ENCODE measurements at regions of chr3 and their contacts with region 1.

Region 1: DNA sequence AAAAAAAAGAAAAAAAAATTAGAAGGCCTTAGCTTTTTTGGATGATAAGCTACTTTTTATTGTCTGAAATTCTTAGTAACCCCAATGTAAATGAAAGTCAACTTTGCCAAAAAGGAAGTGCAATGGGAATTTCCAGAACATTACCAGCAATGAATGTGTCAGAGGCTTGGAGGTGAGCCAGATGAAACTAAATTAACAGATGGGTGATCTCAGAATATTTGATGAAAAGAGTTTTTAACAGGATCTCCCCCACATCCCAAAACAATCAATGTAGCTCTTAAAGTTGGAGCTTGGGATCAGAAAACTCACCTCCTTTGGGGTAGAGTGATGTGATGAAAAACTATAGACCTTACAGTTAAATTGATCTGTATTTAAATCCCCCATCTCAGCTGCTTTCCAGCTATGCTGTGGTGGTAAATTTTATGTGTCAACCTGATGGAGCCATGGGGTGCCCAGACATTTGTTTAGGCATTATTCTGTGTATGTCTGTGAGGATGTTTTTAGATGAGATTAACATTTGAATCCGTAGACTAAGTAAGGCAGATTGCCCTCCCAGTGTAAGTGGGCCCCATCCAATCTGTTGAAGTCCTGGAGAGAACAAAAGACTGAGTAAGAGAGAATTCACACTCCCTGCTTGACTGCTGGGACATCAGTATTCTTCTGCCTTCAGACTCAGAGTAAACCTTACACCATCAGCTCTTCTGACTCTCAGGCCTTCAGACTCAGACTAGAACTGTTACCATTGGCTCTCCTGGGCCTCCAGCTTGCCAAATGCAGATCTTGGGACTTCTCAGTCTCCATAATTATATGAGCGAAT is 84.3 kb upstream of the TNFSF10 start:
- DNase-seq: peak; percentile 54
- H3K27ac ChIP-seq: peak overlapping the region; percentile 77
- CTCF ChIP-seq: no peak

Region 2: GRCh38 chr3:172595641-172596393 is 11.7 kb before region 1 on chr3:
- CTCF ChIA-PET with region 1: interaction called, 11 read pairs
- POLR2A ChIA-PET with region 1: no interaction called
- DNase-seq: peak; percentile 72
- H3K27ac ChIP-seq: no peak overlapping the region
- CTCF ChIP-seq: peak; percentile 92

Measured in RWPE1 (cell line).